ENCODE measurements at regions of chr21 and their contacts with region 1.

Region 1: DNA sequence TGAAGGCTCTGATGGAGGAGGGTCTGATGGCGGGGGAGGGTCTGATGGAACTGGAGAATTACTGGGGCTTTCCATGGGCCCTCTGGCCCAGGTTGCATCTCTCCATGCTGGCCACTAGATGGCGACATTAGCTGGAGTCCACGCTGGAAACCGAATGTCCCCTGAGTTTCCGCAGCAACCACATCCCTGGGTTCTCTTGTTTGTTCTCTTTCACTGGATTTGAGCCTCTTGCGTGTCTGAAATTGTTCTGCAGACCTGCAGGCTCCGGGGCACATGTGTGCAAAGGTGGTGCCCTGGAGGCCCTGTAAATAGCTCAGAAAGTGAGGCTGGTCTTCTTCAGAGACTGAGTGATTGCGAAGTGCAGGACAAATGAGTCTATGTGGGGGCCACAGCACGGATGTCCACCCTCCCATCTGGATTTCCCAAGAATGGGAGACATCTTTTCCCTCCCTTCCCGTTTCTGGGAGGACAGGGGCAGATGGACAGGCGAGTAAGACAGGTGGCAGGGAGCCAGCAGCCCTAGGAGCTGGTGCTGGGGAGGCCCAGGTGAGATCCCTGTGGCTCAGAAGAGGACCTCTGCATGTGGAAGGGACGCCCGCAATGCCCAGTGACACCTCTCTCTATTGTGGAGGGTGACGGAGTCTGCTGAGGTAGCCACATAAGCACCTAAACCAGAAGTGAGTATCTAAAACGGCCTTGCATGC is 73.2 kb upstream of the ABCG1 start:
- DNase-seq: peak; percentile 17
- ATAC-seq: peak; percentile 92
- H3K4me3 ChIP-seq: no peak overlapping the region
- H3K27ac ChIP-seq: no peak overlapping the region
- H3K4me1 ChIP-seq: no peaks in the 10 kb centered on the region
- H3K27me3 ChIP-seq: no peaks in the 10 kb centered on the region
- CTCF ChIP-seq: peak; percentile 90 to 96 (median 91); a peak in 5 of 6 replicates
- EP300 ChIP-seq: no peak
- POLR2A ChIP-seq: no peak
- RAD21 ChIP-seq: peak; percentile 87

Region 2: GRCh38 chr21:42038826-42039425 is 106.8 kb before region 1 on chr21:
- CTCF ChIA-PET with region 1: no interaction called
- POLR2A ChIA-PET with region 1: no interaction called
- RAD21 ChIA-PET with region 1: no interaction called
- SMC1A ChIA-PET with region 1: no interaction called
- in situ Hi-C with region 1: no loop called
- intact Hi-C with region 1: no loop called
- DNase-seq: no peak
- ATAC-seq: no peak
- H3K4me3 ChIP-seq: no peak overlapping the region
- H3K27ac ChIP-seq: no peak overlapping the region
- H3K4me1 ChIP-seq: no peaks in the 10 kb centered on the region
- H3K27me3 ChIP-seq: no peaks in the 10 kb centered on the region; a peak in 2 of 4 replicates
- CTCF ChIP-seq: no peak
- EP300 ChIP-seq: no peak
- POLR2A ChIP-seq: no peak
- RAD21 ChIP-seq: no peak

Region 3: DNA sequence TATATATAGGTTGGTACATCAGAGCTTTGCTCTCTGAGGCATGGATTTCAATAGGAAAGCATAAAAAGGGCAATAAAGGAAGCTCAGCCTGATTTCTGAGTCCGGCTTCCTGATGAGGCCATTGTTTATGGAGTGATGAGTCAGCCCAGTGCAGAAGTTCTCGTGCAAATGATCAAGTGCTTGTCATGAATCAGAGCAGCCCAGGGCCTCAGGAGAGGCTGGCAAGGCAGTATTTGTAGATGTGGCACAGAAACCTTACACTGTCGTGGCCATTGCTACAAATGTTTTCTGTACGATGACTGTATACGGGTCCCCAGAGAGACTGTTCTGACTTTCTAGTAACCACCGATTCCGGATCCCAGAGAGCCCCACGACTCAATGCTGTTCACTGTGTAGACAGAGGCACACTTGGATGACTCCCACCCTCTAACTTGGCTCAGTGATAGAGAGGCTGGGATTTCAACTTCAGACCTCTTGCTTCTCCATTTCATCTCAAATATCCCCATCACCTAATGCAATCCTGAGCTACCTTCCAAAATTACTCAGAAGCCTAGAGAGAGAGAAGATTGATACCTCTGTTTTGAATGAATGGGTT is 47.8 kb before region 1 on chr21:
- CTCF ChIA-PET with region 1: no interaction called
- POLR2A ChIA-PET with region 1: no interaction called
- RAD21 ChIA-PET with region 1: no interaction called
- SMC1A ChIA-PET with region 1: no interaction called
- in situ Hi-C with region 1: no loop called
- intact Hi-C with region 1: no loop called
- DNase-seq: no peak
- ATAC-seq: peak; percentile 31
- H3K4me3 ChIP-seq: no peak overlapping the region
- H3K27ac ChIP-seq: no peak overlapping the region
- H3K4me1 ChIP-seq: peaks cover 3% of the 10 kb centered on the region; the same call in 1 of the 2 replicates
- H3K27me3 ChIP-seq: no peaks in the 10 kb centered on the region; a peak in 2 of 4 replicates
- CTCF ChIP-seq: no peak
- EP300 ChIP-seq: no peak
- POLR2A ChIP-seq: no peak
- RAD21 ChIP-seq: no peak

Region 4: DNA sequence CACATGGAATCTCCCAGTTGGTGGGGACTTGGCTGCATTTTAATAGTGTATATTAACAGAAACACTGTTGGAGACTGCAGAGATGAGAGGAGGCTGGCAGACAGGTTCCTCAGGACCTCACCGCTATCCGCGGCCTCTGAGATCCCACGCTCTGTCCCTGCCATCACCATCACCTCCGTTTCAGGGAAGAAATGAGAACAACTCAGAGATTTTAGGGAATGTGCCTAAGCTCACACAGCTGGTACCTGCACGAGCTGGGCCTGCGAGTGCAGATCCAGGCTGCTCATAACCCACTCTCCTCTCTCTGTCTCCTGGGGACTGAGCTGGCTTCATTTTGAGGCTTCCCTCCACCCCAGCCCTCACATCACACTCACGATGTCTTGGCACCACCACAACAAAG is 12.6 kb before region 1 on chr21:
- CTCF ChIA-PET with region 1: interaction called, 10 read pairs
- POLR2A ChIA-PET with region 1: no interaction called
- RAD21 ChIA-PET with region 1: interaction called, 7 read pairs
- SMC1A ChIA-PET with region 1: no interaction called
- in situ Hi-C with region 1: no loop called
- intact Hi-C with region 1: no loop called
- DNase-seq: no peak
- ATAC-seq: no peak
- H3K4me3 ChIP-seq: no peak overlapping the region
- H3K27ac ChIP-seq: no peak overlapping the region
- H3K4me1 ChIP-seq: peaks cover 10% of the 10 kb centered on the region
- H3K27me3 ChIP-seq: no peaks in the 10 kb centered on the region
- CTCF ChIP-seq: no peak
- EP300 ChIP-seq: no peak
- POLR2A ChIP-seq: no peak
- RAD21 ChIP-seq: no peak

Region 5: GRCh38 chr21:42220138-42220701 is 74.5 kb after region 1 on chr21:
- CTCF ChIA-PET with region 1: interaction called, 10 read pairs
- POLR2A ChIA-PET with region 1: no interaction called
- RAD21 ChIA-PET with region 1: interaction called, 7 read pairs
- SMC1A ChIA-PET with region 1: interaction called, 11 read pairs
- in situ Hi-C with region 1: no loop called
- intact Hi-C with region 1: no loop called
- DNase-seq: no peak
- ATAC-seq: peak; percentile 81
- H3K4me3 ChIP-seq: peak overlapping the region; percentile 71
- H3K27ac ChIP-seq: no peak overlapping the region
- H3K4me1 ChIP-seq: peaks cover 9% of the 10 kb centered on the region; the same call in 1 of the 2 replicates
- H3K27me3 ChIP-seq: peaks cover 0 to 4% of the 10 kb centered on the region in 2 experiments; a peak in 1 of 4 replicates
- CTCF ChIP-seq: no peak
- EP300 ChIP-seq: no peak
- POLR2A ChIP-seq: no peak
- RAD21 ChIP-seq: no peak

Region 6: DNA sequence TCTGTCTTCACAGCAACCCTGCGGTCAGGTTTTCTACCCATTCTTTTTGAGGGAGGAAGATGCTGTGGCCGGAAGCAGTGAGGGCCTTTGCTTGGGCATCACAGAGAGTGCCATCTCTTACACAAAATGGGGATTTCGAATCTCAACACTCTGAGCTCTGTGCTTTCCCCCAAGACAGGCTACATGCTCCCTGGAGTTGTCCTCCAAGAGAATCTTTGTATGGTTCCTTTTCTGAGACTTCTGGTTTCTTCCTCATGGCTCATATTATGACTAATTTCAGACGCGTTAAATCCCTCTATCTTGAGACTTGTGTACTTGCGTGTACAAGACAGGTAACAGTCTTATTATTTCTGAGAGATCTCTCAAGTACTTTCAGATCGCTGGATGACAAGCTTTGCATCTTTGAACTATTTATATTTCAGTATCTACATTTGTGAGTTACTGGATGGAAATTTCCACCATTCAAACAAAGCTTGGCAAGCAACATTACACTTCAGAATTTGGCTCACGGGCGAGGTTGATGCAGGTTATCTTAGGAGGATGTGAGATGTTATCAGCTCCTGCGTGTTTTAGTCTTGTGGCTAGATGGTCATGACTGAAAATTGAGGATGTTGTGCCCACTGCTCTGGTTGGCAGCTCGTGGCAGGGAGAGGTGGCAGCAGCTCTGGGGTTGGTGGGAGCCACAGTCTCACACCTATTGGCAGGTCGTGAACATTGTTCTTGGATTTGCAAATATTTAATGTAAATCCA is 92.6 kb after region 1 on chr21:
- CTCF ChIA-PET with region 1: interaction called, 9 read pairs
- POLR2A ChIA-PET with region 1: no interaction called
- RAD21 ChIA-PET with region 1: interaction called, 6 read pairs
- SMC1A ChIA-PET with region 1: interaction called, 16 read pairs
- in situ Hi-C with region 1: no loop called
- intact Hi-C with region 1: no loop called
- DNase-seq: peak; percentile 57
- ATAC-seq: peak; percentile 39
- H3K4me3 ChIP-seq: no peak overlapping the region
- H3K27ac ChIP-seq: peak overlapping the region; percentile 22
- H3K4me1 ChIP-seq: peaks cover 65% of the 10 kb centered on the region
- H3K27me3 ChIP-seq: no peaks in the 10 kb centered on the region
- CTCF ChIP-seq: no peak
- EP300 ChIP-seq: peak; percentile 25 to 39; a peak in 1 of 4 replicates
- POLR2A ChIP-seq: no peak
- RAD21 ChIP-seq: no peak

Region 7: DNA sequence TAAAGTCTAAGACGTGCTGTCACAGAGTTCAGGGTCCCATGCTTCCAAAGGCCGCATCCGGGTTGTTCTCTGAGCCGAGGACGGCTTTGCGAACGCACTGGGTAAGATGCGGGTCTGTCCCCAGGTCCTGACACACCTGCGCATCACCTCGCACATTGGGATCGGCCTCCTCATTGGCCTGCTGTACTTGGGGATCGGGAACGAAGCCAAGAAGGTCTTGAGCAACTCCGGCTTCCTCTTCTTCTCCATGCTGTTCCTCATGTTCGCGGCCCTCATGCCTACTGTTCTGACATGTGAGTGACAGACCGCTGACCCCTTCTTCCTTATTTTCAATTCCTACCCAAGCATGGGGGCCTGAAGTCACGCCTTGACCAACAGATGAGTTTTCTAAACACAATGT is 144.2 kb after region 1 on chr21:
- CTCF ChIA-PET with region 1: interaction called, 10 read pairs
- POLR2A ChIA-PET with region 1: no interaction called
- RAD21 ChIA-PET with region 1: interaction called, 11 read pairs
- SMC1A ChIA-PET with region 1: interaction called, 6 read pairs
- in situ Hi-C with region 1: no loop called
- intact Hi-C with region 1: no loop called
- DNase-seq: no peak
- ATAC-seq: no peak
- H3K4me3 ChIP-seq: no peak overlapping the region
- H3K27ac ChIP-seq: no peak overlapping the region
- H3K4me1 ChIP-seq: peaks cover 28% of the 10 kb centered on the region
- H3K27me3 ChIP-seq: no peaks in the 10 kb centered on the region
- CTCF ChIP-seq: no peak
- EP300 ChIP-seq: no peak
- POLR2A ChIP-seq: no peak
- RAD21 ChIP-seq: no peak

Region 8: GRCh38 chr21:42337830-42338728 is 192.4 kb after region 1 on chr21:
- CTCF ChIA-PET with region 1: interaction called, 18 read pairs
- POLR2A ChIA-PET with region 1: no interaction called
- RAD21 ChIA-PET with region 1: no interaction called
- SMC1A ChIA-PET with region 1: interaction called, 3 read pairs
- in situ Hi-C with region 1: no loop called
- intact Hi-C with region 1: no loop called
- DNase-seq: no peak
- ATAC-seq: peak; percentile 90
- H3K4me3 ChIP-seq: no peak overlapping the region
- H3K27ac ChIP-seq: no peak overlapping the region
- H3K4me1 ChIP-seq: peaks cover 13% of the 10 kb centered on the region
- H3K27me3 ChIP-seq: no peaks in the 10 kb centered on the region
- CTCF ChIP-seq: peak; percentile 50 to 62 (median 53)
- EP300 ChIP-seq: no peak
- POLR2A ChIP-seq: no peak
- RAD21 ChIP-seq: peak; percentile 81

Region 9: DNA sequence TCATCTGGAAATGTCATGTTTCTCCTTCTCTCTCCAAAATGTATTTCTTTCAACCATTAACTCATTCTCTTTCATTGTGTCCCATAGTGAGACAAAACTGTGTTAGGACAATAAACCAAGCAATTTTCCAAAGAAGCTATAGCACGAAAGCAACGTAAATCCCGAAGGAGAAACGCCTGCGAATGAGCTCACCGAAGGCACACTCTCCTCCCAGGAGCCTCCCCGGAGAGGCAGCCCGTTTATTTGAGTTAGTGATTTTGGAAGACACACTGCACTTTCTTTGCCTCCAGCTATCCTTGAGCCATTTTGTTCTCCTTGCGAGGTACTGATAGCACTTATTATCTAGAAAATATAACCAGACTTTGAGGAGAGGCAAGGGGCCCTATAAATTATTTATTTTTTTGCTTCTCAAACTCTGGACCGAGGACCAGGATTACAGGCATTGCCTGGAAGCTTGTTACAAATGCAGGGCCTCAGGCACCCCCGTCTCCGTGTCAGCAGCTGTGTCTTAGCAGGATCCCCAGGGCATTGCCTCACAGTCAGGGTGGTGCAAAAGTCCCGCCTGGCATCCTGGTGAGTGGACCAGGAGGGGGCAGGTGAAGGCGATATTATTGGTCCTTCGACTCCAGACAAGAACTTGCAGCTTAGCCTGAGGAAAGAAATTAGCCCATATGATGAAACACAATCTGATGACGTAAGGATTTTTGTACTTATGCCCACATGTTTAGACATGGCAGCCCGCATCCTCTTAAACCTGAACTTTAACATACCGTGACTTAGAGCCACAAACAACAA is 309.3 kb after region 1 on chr21:
- CTCF ChIA-PET with region 1: interaction called, 16 read pairs
- POLR2A ChIA-PET with region 1: no interaction called
- RAD21 ChIA-PET with region 1: interaction called, 5 read pairs
- SMC1A ChIA-PET with region 1: interaction called, 6 read pairs
- in situ Hi-C with region 1: loop called (anchors 5 kb)
- intact Hi-C with region 1: loop called (anchors 1 kb)
- DNase-seq: no peak
- ATAC-seq: no peak
- H3K4me3 ChIP-seq: no peak overlapping the region
- H3K27ac ChIP-seq: no peak overlapping the region
- H3K4me1 ChIP-seq: peaks cover 8% of the 10 kb centered on the region
- H3K27me3 ChIP-seq: no peaks in the 10 kb centered on the region
- CTCF ChIP-seq: no peak
- EP300 ChIP-seq: no peak
- POLR2A ChIP-seq: no peak
- RAD21 ChIP-seq: peak; percentile 27; the same call in 1 of the 2 replicates

Region 10: DNA sequence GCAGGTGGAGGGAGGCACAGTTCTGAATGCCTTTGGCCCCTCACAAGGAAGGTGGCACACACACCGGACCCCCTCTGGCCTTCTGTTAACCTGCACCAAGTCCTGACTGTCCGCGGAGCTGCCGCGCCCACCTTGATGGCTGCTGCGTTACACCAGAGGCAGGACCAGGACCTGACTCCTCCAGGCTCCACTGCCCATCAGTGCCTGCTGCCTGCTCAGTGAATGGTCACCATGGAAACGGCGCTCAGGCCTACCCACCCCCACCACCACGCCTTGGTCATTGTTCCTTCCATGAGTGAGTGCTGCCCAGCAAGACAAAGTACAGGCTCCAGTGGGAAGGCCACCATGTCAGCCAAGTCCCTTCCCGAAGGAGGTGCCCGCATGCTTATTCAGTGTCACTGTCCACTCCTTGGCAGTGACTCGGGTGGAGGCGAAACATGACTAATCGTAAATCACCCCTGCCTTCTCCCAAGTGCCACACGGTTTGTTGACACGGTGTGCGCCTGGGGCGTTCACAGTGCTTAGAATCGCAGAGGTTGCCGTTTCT is 425.2 kb after region 1 on chr21:
- CTCF ChIA-PET with region 1: no interaction called
- POLR2A ChIA-PET with region 1: no interaction called
- RAD21 ChIA-PET with region 1: no interaction called
- SMC1A ChIA-PET with region 1: no interaction called
- in situ Hi-C with region 1: no loop called
- intact Hi-C with region 1: no loop called
- DNase-seq: no peak
- ATAC-seq: no peak
- H3K4me3 ChIP-seq: no peak overlapping the region
- H3K27ac ChIP-seq: no peak overlapping the region
- H3K4me1 ChIP-seq: no peaks in the 10 kb centered on the region
- H3K27me3 ChIP-seq: no peaks in the 10 kb centered on the region
- CTCF ChIP-seq: no peak
- EP300 ChIP-seq: no peak
- POLR2A ChIP-seq: 0 out of 2 replicates have a peak, but pooled peaks have one; percentile 23
- RAD21 ChIP-seq: no peak

Measured in GM12878 (cell line).